ENCODE measurements at regions of chr1 and their contacts with region 1.

Region 1: DNA sequence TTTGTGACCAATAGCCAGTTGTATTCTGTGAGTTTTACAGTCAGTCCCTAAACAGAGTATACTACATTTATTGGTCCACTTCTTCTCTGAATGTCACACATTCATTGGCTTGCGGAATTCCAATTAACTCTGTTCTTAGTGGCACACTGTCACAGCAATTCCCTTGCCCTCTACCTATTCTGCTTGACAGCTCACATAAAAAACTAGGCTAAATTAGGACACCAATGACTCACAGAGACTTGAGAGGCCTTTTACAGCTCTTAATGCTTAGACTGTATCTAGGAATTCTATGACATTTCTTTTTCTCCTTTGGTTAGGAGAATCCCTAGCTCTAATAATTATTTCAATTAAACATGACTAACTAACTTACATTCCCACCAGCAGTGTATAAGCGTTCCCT is 104.1 kb downstream of the NEGR1 start:
- DNase-seq: peak; percentile 38
- ATAC-seq: peak; percentile 48; the same call in 1 of the 2 replicates
- H3K4me3 ChIP-seq: no peak overlapping the region
- H3K27ac ChIP-seq: no peak overlapping the region
- H3K4me1 ChIP-seq: 0 out of 2 replicates have a peak, but pooled peaks cover 2% of the 10 kb centered on the region
- H3K27me3 ChIP-seq: no peaks in the 10 kb centered on the region
- CTCF ChIP-seq: no peak
- POLR2A ChIP-seq: no peak
- RAD21 ChIP-seq: no peak

Region 2: DNA sequence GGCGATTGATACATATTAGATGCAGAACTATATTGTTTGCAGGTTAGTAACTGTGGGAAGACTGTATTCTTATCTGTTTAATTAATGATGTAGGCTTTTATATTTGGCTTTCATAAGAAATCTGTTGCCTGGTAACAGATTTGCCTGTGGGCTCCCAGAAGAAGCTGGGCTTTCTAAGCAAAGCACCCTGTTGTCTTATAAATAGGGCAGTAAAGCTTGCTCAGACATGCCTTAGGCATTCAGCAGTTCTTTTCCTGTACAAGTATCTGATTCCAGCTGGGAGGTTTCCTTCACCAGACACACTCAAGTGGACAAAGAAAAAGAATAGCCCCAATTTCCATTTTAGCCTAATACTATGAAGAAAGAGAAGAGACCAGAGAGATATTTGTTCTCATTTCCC is 1495.7 kb after region 1 on chr1:
- CTCF ChIA-PET with region 1: no interaction called
- POLR2A ChIA-PET with region 1: no interaction called
- dilution Hi-C with region 1: no loop called
- in situ Hi-C with region 1: no loop called
- intact Hi-C with region 1: loop called (anchors 5 kb)
- DNase-seq: no peak
- ATAC-seq: no peak
- H3K4me3 ChIP-seq: no peak overlapping the region
- H3K27ac ChIP-seq: no peak overlapping the region
- H3K4me1 ChIP-seq: no peaks in the 10 kb centered on the region
- H3K27me3 ChIP-seq: no peaks in the 10 kb centered on the region
- CTCF ChIP-seq: no peak
- POLR2A ChIP-seq: no peak
- RAD21 ChIP-seq: no peak